Activated CD4-positive, alpha-beta memory T cell treated with anti-CD3 and anti-CD28 coated beads, Interleukin-2, amount 10 ng/mL, durations not matched to agents 7 days and 5 days (primary cell): ENCODE measurements at regions of chr5 and their contacts with region 1.

Region 1: GRCh38 chr5:151825445-151825844 is 53.7 kb downstream of the G3BP1 start:
- DNase-seq: peak; percentile 37
- H3K4me3 Mint-ChIP-seq: no peak overlapping the region
- H3K27ac Mint-ChIP-seq: no peak overlapping the region
- H3K4me1 Mint-ChIP-seq: peaks cover 4% of the 10 kb centered on the region
- H3K27me3 Mint-ChIP-seq: no peaks in the 10 kb centered on the region

Region 2: GRCh38 chr5:151799407-151799806 is 26.0 kb before region 1 on chr5:
- CTCF ChIA-PET with region 1: interaction called, 12 read pairs
- POLR2A ChIA-PET with region 1: no interaction called
- DNase-seq: peak; percentile 21
- H3K4me3 Mint-ChIP-seq: no peak overlapping the region
- H3K27ac Mint-ChIP-seq: peak overlapping the region; percentile 57
- H3K4me1 Mint-ChIP-seq: peaks cover 28% of the 10 kb centered on the region
- H3K27me3 Mint-ChIP-seq: no peaks in the 10 kb centered on the region

Region 3: GRCh38 chr5:152142840-152143469 is 317.5 kb after region 1 on chr5:
- CTCF ChIA-PET with region 1: interaction called, 125 read pairs
- POLR2A ChIA-PET with region 1: no interaction called
- DNase-seq: peak; percentile 65
- H3K4me3 Mint-ChIP-seq: no peak overlapping the region
- H3K27ac Mint-ChIP-seq: no peak overlapping the region
- H3K4me1 Mint-ChIP-seq: no peaks in the 10 kb centered on the region
- H3K27me3 Mint-ChIP-seq: peaks cover 2% of the 10 kb centered on the region

Region 4: DNA sequence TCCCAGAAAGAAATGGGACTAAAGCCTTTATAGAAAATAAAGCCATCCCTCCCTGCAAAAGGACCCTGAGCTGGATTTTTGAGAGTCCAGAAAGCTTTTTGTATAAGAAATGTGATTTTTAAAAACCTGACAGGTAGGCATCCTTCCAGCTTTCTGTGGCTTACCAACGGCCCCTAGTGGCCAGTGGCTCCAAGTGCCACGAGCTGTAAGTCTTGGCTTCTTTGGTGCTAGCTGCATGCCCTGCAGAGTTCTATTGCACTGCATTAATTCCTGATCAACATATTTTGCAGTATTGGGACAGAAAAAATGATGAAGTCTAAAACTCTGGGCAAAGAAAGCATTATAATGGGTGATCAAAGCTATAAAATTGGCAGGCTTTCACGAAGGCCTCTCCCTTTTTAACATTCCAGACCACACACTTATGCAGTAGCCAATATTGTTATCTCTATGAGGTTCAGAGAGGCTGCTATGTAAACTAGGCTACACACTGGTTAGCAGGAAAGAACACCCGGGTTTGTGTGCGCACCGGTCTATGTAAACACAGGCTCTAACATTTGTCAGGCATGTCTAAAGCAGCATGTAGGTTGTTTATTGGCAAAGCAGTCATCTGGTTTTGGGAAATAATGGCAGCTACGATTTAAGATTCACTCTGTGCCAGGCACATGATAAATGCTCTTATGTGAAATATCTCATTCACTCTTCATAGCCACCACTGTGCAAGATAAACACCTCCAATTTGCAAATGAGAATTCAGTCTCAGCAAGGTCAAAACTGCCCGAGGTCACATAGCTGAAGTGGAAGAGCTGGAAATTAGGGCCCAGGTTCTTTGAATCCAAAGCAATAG is 524.5 kb after region 1 on chr5:
- CTCF ChIA-PET with region 1: interaction called, 31 read pairs
- POLR2A ChIA-PET with region 1: no interaction called
- DNase-seq: peak; percentile 43
- H3K4me3 Mint-ChIP-seq: no peak overlapping the region
- H3K27ac Mint-ChIP-seq: no peak overlapping the region
- H3K4me1 Mint-ChIP-seq: no peaks in the 10 kb centered on the region
- H3K27me3 Mint-ChIP-seq: no peaks in the 10 kb centered on the region